PC-3 (cell line): ENCODE measurements at regions of chr1 and their contacts with region 1.

Region 1: GRCh38 chr1:227542143-227543120 is 20.9 kb upstream of the ZNF678 start:
- DNase-seq: peak; percentile 98
- ATAC-seq: peak; percentile 95
- H3K4me3 ChIP-seq: peak overlapping the region; percentile 66
- H3K27ac ChIP-seq: no peak overlapping the region
- H3K4me1 ChIP-seq: peaks cover 10% of the 10 kb centered on the region; the same call in 1 of the 2 replicates
- H3K27me3 ChIP-seq: no peaks in the 10 kb centered on the region
- CTCF ChIP-seq: peak; percentile 97

Region 2: DNA sequence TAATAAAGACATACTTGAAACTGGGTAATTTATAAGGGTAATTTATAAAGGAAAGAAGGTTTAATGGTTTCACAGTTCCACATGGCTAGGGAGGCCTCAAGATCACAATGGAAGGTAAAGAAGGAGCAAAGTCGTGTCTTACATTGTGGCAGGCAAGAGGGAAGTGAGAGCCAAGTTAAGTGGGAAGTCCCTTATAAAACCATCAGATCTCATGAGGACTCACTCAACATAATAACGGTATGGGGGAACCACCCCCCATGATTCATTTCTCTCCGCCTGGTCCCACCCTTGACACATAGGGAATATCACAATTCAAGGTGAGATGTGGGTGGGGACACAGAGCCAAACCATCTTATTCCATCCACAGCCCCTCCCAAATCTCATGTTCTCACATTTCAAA is 55.9 kb before region 1 on chr1:
- CTCF ChIA-PET with region 1: interaction called, 5 read pairs
- POLR2A ChIA-PET with region 1: no interaction called
- intact Hi-C with region 1: loop called (anchors 1 kb)
- DNase-seq: no peak
- ATAC-seq: no peak
- H3K4me3 ChIP-seq: no peak overlapping the region
- H3K27ac ChIP-seq: no peak overlapping the region
- H3K4me1 ChIP-seq: no peaks in the 10 kb centered on the region
- H3K27me3 ChIP-seq: 0 out of 2 replicates have a peak, but pooled peaks cover 6% of the 10 kb centered on the region
- CTCF ChIP-seq: no peak

Region 3: DNA sequence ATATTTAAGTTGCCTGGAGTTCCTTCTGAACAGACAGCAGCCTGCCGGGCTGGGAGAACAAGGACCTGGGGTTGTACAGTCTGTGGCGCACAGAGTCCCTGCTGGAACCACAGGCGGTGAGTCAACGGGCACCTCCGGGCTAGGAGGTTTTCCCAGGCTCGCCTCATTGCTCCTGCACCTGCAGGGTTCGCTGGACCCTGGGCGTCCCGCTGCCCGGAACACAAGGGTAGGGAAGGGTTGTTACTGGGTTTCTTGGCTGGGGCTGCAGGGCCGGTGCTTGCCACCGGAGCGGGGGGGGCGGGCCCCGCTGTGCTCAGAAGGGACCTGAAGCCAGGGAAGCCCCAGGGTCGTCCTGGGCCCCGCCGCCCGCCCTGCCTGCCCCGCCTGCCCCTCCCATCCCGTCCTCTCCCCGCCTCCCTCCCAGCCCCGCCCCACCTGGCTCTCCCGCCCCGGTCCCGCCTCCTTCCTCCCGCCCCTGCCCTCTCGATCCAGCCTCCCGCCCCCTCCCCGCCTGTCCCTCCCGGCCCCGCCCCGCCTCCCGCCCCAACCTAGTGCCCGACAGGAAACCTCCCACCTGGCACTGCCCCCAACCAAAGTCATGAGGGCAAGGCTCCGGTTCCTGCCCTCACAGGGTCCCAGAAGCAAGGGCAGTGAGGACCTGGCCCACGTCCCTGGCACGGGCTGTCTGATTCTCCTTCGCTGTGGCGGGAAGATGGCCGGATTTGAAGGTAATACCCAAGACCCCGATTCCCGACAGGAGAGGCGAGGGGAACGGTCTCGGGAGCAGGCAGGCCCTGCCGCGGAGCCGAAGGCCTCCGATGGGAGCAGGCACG is 185.8 kb after region 1 on chr1:
- CTCF ChIA-PET with region 1: no interaction called
- POLR2A ChIA-PET with region 1: no interaction called
- intact Hi-C with region 1: loop called (anchors 10 kb)
- DNase-seq: peak; percentile 98
- ATAC-seq: peak; percentile 89
- H3K4me3 ChIP-seq: peak overlapping the region; percentile 82
- H3K27ac ChIP-seq: peak overlapping the region; percentile 29
- H3K4me1 ChIP-seq: peaks cover 19% of the 10 kb centered on the region
- H3K27me3 ChIP-seq: no peaks in the 10 kb centered on the region
- CTCF ChIP-seq: 0 out of 2 replicates have a peak, but pooled peaks have one; percentile 14

Region 4: GRCh38 chr1:227744668-227745067 is 202.2 kb after region 1 on chr1:
- CTCF ChIA-PET with region 1: no interaction called
- POLR2A ChIA-PET with region 1: interaction called, 10 read pairs
- intact Hi-C with region 1: no loop called
- DNase-seq: no peak
- ATAC-seq: no peak
- H3K4me3 ChIP-seq: no peak overlapping the region
- H3K27ac ChIP-seq: no peak overlapping the region
- H3K4me1 ChIP-seq: no peaks in the 10 kb centered on the region
- H3K27me3 ChIP-seq: no peaks in the 10 kb centered on the region
- CTCF ChIP-seq: no peak